Mammary epithelial cell (primary cell): ENCODE measurements at regions of chr9 and their contacts with region 1.

Region 1: GRCh38 chr9:104747558-104748358 is at the start of gene NIPSNAP3A:
- DNase-seq: peak; percentile 80
- H3K4me3 ChIP-seq: peak within 1 kb of the TSS; percentile 83 to 95 (median 95)
- H3K27ac ChIP-seq: peak within 1 kb of the TSS; percentile 89
- H3K4me1 ChIP-seq: peaks cover 14% of the 10 kb centered on the region
- H3K27me3 ChIP-seq: no peaks in the 10 kb centered on the region
- CTCF ChIP-seq: no peak
- total RNA-seq, gene NIPSNAP3A: 19.2 to 50.2 TPM

Region 2: DNA sequence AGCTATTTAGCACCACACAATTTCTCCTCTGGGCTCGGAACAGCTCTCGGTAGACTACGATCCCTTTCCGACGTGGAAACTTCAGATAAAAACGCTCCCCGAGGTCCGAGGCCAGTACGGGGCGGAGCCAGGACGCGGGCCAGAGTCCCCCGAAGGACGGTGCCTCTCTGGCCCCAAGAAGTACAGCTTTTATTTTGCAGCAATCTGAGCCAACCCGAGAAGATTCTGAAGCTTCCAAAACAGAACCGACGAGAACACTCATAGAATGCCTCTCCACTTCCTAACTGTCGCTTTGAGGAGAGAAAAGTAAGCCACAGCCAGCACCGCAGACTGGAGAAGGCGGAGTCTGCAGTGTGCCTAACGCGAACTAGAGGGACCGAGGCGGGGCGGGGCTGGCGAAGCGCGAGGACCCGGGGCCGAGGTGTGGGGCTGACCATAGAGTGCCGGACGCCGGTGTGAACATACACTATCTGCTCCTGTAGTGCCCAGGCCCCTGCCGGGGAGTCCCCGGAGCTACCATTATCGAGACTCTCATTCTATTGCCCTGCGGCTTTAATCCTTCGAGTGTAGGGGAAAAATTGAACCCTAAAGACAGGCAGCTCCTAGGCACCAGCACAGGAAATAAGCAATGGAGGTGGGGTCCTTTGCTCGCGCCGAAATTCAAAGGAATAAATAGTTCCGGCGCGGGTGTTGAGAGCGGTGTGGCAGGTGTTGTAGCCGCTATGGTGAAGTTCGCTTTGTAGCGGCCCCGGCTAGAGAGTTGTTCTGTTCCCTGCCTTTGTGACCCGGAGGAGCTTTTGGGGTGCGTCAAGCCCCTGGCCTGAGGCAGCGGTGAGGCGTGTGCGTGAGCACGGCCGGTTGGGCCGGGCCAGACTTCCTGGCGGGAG is 653.9 kb before region 1 on chr9 and contains the start of gene SMC2:
- CTCF ChIA-PET with region 1: no interaction called
- dilution Hi-C with region 1: no loop called
- in situ Hi-C with region 1: no loop called
- intact Hi-C with region 1: loop called (anchors 10 kb)
- DNase-seq: peak; percentile 86
- H3K4me3 ChIP-seq: peak within 1 kb of the TSS; percentile 71 to 77 (median 76)
- H3K27ac ChIP-seq: peak within 1 kb of the TSS; percentile 98
- H3K4me1 ChIP-seq: peaks cover 14% of the 10 kb centered on the region
- H3K27me3 ChIP-seq: no peaks in the 10 kb centered on the region
- CTCF ChIP-seq: no peak
- total RNA-seq, gene SMC2: 9.8 to 25.1 TPM

Region 3: DNA sequence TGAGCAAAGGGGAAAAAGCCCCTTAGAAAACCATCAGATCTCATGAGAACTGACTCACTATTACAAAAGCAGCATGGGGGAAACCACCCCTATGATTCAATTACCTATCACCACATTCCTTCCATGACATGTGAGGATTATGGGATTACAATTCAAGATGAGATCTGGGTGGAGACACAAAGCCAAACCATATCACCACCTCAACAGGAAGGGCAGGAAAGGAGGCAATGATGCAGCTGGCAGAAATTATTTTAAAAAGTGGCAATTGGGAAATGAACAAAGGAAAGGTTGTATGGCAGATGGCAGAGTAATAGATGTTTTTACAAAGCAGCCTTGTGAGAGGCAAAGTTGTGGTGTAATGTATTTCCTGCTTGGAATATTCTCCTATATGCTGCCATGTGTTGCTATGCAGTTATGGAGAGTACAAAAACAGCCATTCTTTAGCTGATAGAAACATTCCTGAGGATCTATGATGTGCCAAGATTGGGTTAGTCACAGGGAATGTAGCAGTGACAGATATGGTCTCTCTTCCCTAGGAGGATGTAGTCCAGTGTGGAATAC is 514.9 kb before region 1 on chr9:
- CTCF ChIA-PET with region 1: no interaction called
- dilution Hi-C with region 1: no loop called
- in situ Hi-C with region 1: no loop called
- intact Hi-C with region 1: loop called (anchors 10 kb)
- DNase-seq: peak; percentile 98
- H3K4me3 ChIP-seq: no peak overlapping the region
- H3K27ac ChIP-seq: peak overlapping the region; percentile 97
- H3K4me1 ChIP-seq: peaks cover 25% of the 10 kb centered on the region
- H3K27me3 ChIP-seq: no peaks in the 10 kb centered on the region
- CTCF ChIP-seq: no peak

Region 4: GRCh38 chr9:104463864-104464263 is 283.9 kb before region 1 on chr9:
- CTCF ChIA-PET with region 1: no interaction called
- dilution Hi-C with region 1: no loop called
- in situ Hi-C with region 1: no loop called
- intact Hi-C with region 1: no loop called
- DNase-seq: no peak
- H3K4me3 ChIP-seq: no peak overlapping the region
- H3K27ac ChIP-seq: no peak overlapping the region
- H3K4me1 ChIP-seq: no peaks in the 10 kb centered on the region
- H3K27me3 ChIP-seq: no peaks in the 10 kb centered on the region
- CTCF ChIP-seq: no peak

Region 5: GRCh38 chr9:104506565-104506964 is 241.2 kb before region 1 on chr9:
- CTCF ChIA-PET with region 1: no interaction called
- dilution Hi-C with region 1: no loop called
- in situ Hi-C with region 1: no loop called
- intact Hi-C with region 1: loop called (anchors 1 kb)
- DNase-seq: peak; percentile 68
- H3K4me3 ChIP-seq: no peak overlapping the region
- H3K27ac ChIP-seq: no peak overlapping the region
- H3K4me1 ChIP-seq: peaks cover 10% of the 10 kb centered on the region
- H3K27me3 ChIP-seq: no peaks in the 10 kb centered on the region
- CTCF ChIP-seq: no peak

Region 6: DNA sequence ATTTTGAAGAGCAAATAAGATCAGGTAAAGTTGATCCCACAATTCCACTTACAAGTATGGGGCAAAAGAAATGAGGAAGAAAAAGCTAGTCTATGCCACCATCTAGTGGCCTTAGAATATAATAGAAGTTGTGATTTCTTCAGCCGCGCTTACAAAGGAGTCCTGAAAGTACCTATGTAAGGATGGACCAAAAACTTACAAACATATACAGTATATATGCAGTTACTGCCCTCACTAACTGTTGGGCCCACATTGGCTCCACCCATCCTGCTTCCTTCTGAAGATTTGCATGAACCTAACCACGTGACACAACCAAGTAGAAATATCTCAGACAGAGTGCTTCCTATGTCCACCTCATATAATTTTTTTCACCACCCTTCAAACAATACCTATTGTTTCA is 65.1 kb before region 1 on chr9:
- CTCF ChIA-PET with region 1: no interaction called
- dilution Hi-C with region 1: no loop called
- in situ Hi-C with region 1: no loop called
- intact Hi-C with region 1: loop called (anchors 1 kb)
- DNase-seq: peak; percentile 41
- H3K4me3 ChIP-seq: no peak overlapping the region
- H3K27ac ChIP-seq: no peak overlapping the region
- H3K4me1 ChIP-seq: no peaks in the 10 kb centered on the region
- H3K27me3 ChIP-seq: no peaks in the 10 kb centered on the region
- CTCF ChIP-seq: peak; percentile 29 to 54